ENCODE measurements at regions of chr13 and their contacts with region 1.

Region 1: GRCh38 chr13:109786457-109787134 is at the start of gene IRS2:
- DNase-seq: no peak
- ATAC-seq: peak; percentile 46; the same call in 2 of the 3 replicates
- H3K4me3 ChIP-seq: peak within 1 kb of the TSS in 1 of 3 experiments; percentile 10; a peak in 1 of 6 replicates
- H3K27ac ChIP-seq: no peak within 1 kb of the TSS
- H3K4me1 ChIP-seq: no peaks in the 10 kb centered on the region
- H3K27me3 ChIP-seq: peaks cover 0 to 8% of the 10 kb centered on the region in 2 experiments; a peak in 2 of 5 replicates
- CTCF ChIP-seq: no peak
- EP300 ChIP-seq: no peak
- POLR2A ChIP-seq: no peak
- RAD21 ChIP-seq: no peak
- total RNA-seq, gene IRS2: 0.02 TPM in 1 of 2 replicates, not detected in the other

Region 2: DNA sequence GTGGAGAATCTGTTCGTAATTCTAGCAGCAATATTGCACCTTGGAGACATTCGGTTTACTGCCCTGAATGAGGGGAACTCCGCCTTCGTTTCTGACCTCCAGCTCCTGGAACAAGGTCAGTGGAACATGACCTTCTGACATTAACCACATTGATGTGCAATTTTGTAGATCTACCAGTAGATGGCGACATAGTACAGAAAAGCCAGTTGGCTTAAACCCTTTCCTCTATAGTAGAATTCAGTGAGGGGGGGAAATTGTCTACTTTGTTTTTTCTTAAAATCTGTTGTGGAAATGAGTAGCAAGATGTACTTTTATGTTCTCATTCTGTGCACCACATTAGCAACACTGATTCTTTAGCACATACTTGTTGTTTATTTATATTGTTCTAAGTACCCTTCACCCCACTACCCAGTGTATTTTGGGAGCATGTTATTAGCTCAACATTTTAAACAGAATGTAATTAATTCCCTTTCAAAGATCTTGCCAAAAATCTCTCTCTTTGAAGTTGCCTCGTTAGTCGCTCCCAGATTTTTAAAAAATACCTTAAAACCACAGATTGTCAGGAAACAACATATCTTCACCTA is 825.0 kb before region 1 on chr13:
- CTCF ChIA-PET with region 1: no interaction called
- POLR2A ChIA-PET with region 1: no interaction called
- in situ Hi-C with region 1: loop called (anchors 25 kb)
- intact Hi-C with region 1: no loop called
- DNase-seq: peak; percentile 43
- ATAC-seq: peak; percentile 86
- H3K4me3 ChIP-seq: no peak overlapping the region
- H3K27ac ChIP-seq: no peak overlapping the region
- H3K4me1 ChIP-seq: no peaks in the 10 kb centered on the region
- H3K27me3 ChIP-seq: no peaks in the 10 kb centered on the region; a peak in 1 of 5 replicates
- CTCF ChIP-seq: peak; percentile 84
- EP300 ChIP-seq: no peak
- POLR2A ChIP-seq: no peak
- RAD21 ChIP-seq: peak; percentile 55; the same call in 1 of the 2 replicates

Region 3: GRCh38 chr13:109145631-109146030 is 641.0 kb before region 1 on chr13:
- CTCF ChIA-PET with region 1: no interaction called
- POLR2A ChIA-PET with region 1: no interaction called
- in situ Hi-C with region 1: no loop called
- intact Hi-C with region 1: loop called (anchors 5 kb)
- DNase-seq: peak; percentile 13
- ATAC-seq: peak; percentile 80
- H3K4me3 ChIP-seq: no peak overlapping the region
- H3K27ac ChIP-seq: no peak overlapping the region
- H3K4me1 ChIP-seq: no peaks in the 10 kb centered on the region
- H3K27me3 ChIP-seq: no peaks in the 10 kb centered on the region
- CTCF ChIP-seq: peak; percentile 65
- EP300 ChIP-seq: no peak
- POLR2A ChIP-seq: no peak
- RAD21 ChIP-seq: peak; percentile 42; the same call in 1 of the 2 replicates

Region 4: DNA sequence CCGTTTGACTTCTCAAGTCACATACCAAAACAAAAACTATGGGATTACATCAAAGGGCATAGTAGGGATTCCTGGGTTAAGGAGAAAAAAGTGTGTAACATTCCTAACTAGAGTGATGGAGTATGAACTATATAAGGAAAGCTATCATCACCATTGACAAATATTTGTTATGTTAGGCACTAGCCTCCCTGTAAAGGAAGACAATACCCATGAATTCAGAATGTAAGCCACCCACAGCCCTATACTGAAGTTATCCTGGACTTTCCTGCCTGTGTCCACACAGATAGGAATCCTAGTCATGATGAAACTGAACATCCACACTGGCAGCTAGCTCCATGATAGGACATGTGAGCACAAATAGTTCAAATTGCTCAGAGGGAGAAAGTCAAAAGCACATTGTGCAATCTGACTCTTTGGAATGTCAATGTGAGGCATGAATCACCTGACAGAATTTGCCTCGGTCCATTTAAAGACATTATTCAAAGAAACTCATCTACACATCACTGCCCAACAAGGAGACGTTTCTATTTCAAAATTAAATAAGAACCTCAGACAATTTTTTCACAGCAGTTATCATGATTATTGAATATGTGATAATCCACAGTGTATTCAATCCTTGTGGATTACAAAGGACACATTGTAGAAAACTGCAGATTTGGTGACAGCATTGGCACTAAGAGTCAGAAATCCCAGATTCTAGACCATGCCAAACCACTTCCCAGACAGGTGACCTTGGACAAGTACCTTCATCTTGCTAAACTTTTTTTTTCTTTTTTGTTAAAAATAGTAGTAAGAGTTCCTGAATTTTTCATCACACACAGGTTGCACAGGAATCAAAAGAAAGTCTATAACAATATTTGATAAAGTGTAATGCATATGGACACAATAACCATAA is 529.5 kb before region 1 on chr13:
- CTCF ChIA-PET with region 1: no interaction called
- POLR2A ChIA-PET with region 1: no interaction called
- in situ Hi-C with region 1: no loop called
- intact Hi-C with region 1: loop called (anchors 10 kb)
- DNase-seq: peak; percentile 74
- ATAC-seq: peak; percentile 97
- H3K4me3 ChIP-seq: no peak overlapping the region
- H3K27ac ChIP-seq: no peak overlapping the region
- H3K4me1 ChIP-seq: no peaks in the 10 kb centered on the region
- H3K27me3 ChIP-seq: no peaks in the 10 kb centered on the region
- CTCF ChIP-seq: no peak
- EP300 ChIP-seq: no peak
- POLR2A ChIP-seq: no peak
- RAD21 ChIP-seq: no peak

Region 5: DNA sequence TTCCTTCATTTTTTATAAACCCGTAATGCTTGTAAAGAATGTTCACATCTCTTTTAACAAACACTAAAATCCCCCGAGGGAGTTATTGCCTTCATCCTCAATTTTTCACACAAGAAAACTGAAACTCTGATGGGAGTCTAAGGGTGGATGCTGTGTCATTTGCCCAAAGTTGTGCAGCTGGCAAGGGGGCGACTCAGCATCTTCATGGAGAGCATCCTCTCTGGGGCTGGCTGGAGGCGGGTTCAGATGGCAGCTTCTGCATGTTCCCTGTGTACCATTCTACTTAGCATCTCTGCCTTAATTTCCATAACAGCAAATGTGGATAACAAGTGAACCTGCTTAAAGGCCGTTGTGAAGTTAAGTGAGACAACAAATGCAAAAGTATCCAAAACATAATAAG is 256.6 kb before region 1 on chr13:
- CTCF ChIA-PET with region 1: no interaction called
- POLR2A ChIA-PET with region 1: no interaction called
- in situ Hi-C with region 1: no loop called
- intact Hi-C with region 1: no loop called
- DNase-seq: no peak
- ATAC-seq: no peak
- H3K4me3 ChIP-seq: no peak overlapping the region
- H3K27ac ChIP-seq: no peak overlapping the region
- H3K4me1 ChIP-seq: no peaks in the 10 kb centered on the region
- H3K27me3 ChIP-seq: no peaks in the 10 kb centered on the region
- CTCF ChIP-seq: no peak
- EP300 ChIP-seq: no peak
- POLR2A ChIP-seq: no peak
- RAD21 ChIP-seq: no peak

Region 6: DNA sequence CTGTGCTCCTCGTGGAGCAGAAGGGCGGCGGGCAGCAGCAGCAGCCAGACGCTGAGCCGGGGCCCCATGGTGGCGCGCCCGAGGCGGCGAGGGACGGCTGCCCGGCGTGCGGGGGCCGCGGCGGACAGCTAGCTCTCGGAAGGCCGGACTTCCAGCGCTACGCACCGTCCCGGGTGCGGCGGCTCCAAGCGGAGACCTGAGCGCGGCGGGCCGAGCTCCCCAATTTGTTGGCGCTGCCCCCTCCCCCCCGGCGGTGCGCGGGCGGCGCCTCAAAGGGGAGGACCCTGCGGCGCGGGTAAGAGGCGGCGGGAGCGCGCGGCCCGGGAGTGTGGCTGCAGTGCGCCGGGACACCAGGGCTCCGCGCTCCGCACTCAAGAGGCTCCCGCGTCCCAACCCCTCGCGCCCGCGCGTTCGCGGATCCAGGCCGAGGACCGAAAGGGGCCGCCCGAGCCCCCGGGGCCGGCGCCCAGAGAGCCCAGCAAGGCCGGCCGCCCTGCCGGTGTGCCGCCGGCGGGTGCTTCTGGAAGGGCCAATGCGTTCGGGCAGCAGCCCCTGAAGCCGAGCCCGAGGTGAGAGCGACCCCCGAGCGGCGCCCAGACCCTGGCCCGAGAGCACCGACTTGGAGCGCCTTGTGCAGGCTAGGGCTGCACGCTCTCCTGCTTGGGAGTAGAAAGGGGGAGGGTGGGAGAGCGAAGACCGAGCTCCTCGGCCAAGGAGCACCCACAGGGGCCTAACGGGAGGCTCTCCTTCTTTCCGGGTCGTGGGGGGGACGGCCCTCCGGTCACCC is 520.6 kb after region 1 on chr13 and contains the starts of genes COL4A1 and COL4A2:
- CTCF ChIA-PET with region 1: no interaction called
- POLR2A ChIA-PET with region 1: no interaction called
- in situ Hi-C with region 1: no loop called
- intact Hi-C with region 1: no loop called
- DNase-seq: no peak
- ATAC-seq: no peak
- H3K4me3 ChIP-seq: no peak within 1 kb of the TSS
- H3K27ac ChIP-seq: no peak within 1 kb of the TSS
- H3K4me1 ChIP-seq: peaks cover 11% of the 10 kb centered on the region
- H3K27me3 ChIP-seq: peaks cover 6 to 57% of the 10 kb centered on the region in 2 experiments; a peak in 3 of 5 replicates
- CTCF ChIP-seq: no peak
- EP300 ChIP-seq: no peak
- POLR2A ChIP-seq: no peak
- RAD21 ChIP-seq: no peak
- total RNA-seq, gene COL4A1: not detected in 2 replicates
- total RNA-seq, gene COL4A2: 0.15 and 0.22 TPM in 2 replicates

Measured in HepG2 (cell line).